ENCODE measurements at regions of chr11 and their contacts with region 1.

Region 1: DNA sequence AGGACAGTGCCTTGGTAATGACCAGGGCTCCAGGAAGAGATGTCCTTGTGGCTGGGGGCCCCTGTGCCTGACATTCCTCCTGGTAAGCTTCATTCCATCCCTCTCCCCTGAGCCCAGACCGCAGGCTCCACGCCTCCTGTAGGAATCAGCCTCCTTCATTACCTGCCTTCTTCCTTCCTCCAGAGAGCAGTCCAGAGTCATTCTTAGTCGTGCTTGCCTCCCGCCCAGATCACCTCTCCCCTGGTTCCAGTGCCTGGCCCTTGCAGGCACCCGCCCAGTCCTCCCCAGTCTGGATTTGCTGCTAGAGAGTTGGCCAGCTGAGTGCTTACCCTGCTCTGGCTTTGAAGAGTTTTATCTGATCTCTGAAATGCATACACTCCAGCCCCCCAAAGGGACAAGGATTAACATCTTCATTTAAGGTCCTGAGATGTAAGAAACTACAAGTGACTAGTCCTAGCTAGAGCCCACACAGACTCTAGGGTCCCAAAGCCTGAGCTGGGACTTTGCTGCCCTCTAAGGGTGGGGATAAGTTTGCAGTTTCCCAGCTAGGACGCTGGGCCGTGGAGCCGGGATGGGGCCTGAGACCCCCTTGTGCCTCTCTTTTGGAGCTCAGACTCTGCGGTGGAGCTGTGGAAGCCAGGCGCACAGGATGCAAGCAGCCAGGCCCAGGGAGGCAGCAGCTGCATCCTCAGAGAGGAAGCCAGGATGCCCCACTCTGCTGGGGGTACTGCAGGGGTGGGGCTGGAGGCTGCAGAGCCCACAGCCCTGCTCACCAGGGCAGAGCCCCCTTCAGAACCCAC is 1.6 kb downstream of the NR1H3 start:
- DNase-seq: peak; percentile 89 to 90
- H3K4me3 ChIP-seq: peak overlapping the region; percentile 57; the same call in 1 of the 2 replicates
- H3K27ac ChIP-seq: peak overlapping the region; percentile 61
- H3K4me1 ChIP-seq: peaks cover 56% of the 10 kb centered on the region
- H3K27me3 ChIP-seq: no peaks in the 10 kb centered on the region
- CTCF ChIP-seq: peak; percentile 94

Region 2: DNA sequence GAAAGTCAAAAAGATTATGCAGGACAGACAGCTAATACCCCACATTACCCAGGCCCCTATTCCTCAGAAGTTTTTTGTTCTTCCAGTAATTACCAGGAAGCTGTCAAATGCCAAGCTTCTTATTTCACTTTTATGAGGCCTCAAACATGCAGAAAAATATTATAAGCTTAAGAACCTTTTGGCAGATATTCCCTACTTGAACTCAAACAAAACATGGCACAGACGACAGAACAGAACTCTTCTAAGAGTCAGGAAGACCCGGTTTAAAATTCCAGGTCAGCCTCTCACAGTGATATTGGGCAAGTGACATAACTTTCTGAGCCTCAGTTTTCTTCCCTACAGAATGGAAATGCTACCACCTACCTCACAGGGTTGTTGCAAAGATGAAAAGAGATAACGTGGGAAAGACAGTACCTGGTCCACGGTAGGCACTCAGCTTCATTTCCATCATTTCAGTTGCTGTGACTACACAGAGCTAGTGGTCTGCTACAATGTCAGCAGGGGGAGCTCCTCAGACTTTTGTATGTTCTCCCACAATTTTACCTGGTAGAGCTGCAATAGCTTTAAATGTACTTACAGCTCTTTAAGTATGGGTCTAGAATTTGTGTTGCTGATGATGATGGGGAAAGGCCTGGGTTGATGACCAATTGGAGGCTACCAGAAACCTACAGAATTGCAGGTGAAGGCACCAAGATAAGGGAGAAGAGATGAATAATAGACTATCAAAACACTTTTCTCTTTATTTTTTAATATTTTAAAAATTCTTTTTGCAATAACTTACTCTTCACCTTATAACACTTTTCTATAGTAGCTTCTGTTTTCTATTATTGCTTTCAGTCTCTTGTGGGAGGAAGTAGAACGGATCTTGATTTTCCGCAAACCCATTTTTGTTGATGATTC is 769.5 kb before region 1 on chr11:
- CTCF ChIA-PET with region 1: no interaction called
- POLR2A ChIA-PET with region 1: no interaction called
- intact Hi-C with region 1: no loop called
- DNase-seq: peak in 1 of 2 experiments; percentile 23
- H3K4me3 ChIP-seq: no peak overlapping the region
- H3K27ac ChIP-seq: no peak overlapping the region
- H3K4me1 ChIP-seq: no peaks in the 10 kb centered on the region
- H3K27me3 ChIP-seq: no peaks in the 10 kb centered on the region
- CTCF ChIP-seq: peak; percentile 71

Region 3: DNA sequence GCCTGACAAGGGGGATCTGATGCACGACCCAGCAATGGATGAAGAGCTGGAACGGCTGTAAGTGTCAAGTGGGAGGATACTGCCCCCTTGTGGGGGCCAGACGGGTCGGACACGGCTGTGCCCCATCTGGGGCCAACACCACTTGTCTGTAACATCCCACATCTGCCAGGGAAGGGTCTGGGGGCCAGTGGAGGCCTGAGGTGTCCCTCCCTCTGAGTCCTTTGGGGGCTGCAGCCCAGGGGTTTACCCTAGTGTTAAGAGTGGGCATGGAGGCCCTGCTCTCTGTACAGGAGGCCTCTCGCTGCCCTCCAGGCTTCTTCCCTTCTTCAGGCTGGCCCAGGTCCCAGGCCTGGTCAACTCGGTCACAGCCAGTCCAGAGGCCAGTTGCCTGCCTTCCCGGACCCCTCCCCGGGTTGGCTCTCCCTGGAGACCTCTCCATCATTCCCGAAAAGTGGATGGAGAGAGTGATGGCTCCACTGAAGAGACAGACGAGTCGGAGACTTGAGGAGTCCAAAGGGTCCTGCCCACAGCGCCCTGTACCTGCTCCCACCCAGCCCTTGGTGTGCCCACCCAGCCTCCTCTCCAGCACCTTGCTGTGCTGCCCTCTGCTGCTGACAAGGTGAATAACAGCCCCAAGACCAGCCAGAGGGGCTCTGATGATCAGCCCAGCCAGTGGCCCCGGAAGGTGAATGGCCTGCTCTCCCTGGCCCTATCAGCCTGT is 98.1 kb before region 1 on chr11:
- CTCF ChIA-PET with region 1: interaction called, 4 read pairs
- POLR2A ChIA-PET with region 1: interaction called, 12 read pairs
- intact Hi-C with region 1: no loop called
- DNase-seq: peak; percentile 51 to 64
- H3K4me3 ChIP-seq: no peak overlapping the region
- H3K27ac ChIP-seq: no peak overlapping the region
- H3K4me1 ChIP-seq: no peaks in the 10 kb centered on the region
- H3K27me3 ChIP-seq: no peaks in the 10 kb centered on the region
- CTCF ChIP-seq: peak; percentile 75

Region 4: GRCh38 chr11:47186076-47186936 is 73.1 kb before region 1 on chr11 and contains the start of gene PACSIN3:
- CTCF ChIA-PET with region 1: interaction called, 12 read pairs
- POLR2A ChIA-PET with region 1: interaction called, 54 read pairs
- intact Hi-C with region 1: loop called (anchors 1 kb)
- DNase-seq: peak in 1 of 2 experiments; percentile 64
- H3K4me3 ChIP-seq: peak within 1 kb of the TSS; percentile 77
- H3K27ac ChIP-seq: peak within 1 kb of the TSS; percentile 84
- H3K4me1 ChIP-seq: peaks cover 56% of the 10 kb centered on the region
- H3K27me3 ChIP-seq: no peaks in the 10 kb centered on the region
- CTCF ChIP-seq: no peak
- total RNA-seq, gene PACSIN3: 113 and 114 TPM in 2 replicates

Region 5: GRCh38 chr11:47213985-47214564 is 45.3 kb before region 1 on chr11:
- CTCF ChIA-PET with region 1: interaction called, 24 read pairs
- POLR2A ChIA-PET with region 1: interaction called, 4 read pairs
- intact Hi-C with region 1: loop called (anchors 1 kb)
- DNase-seq: peak; percentile 85 to 91
- H3K4me3 ChIP-seq: peak overlapping the region; percentile 70
- H3K27ac ChIP-seq: peak overlapping the region; percentile 49
- H3K4me1 ChIP-seq: peaks cover 29% of the 10 kb centered on the region
- H3K27me3 ChIP-seq: no peaks in the 10 kb centered on the region
- CTCF ChIP-seq: no peak

Region 6: GRCh38 chr11:47355283-47356128 is 96.1 kb after region 1 on chr11:
- CTCF ChIA-PET with region 1: interaction called, 10 read pairs
- POLR2A ChIA-PET with region 1: no interaction called
- intact Hi-C with region 1: loop called (anchors 1 kb)
- DNase-seq: peak; percentile 88 to 99
- H3K4me3 ChIP-seq: peak overlapping the region; percentile 30; the same call in 1 of the 2 replicates
- H3K27ac ChIP-seq: no peak overlapping the region
- H3K4me1 ChIP-seq: no peaks in the 10 kb centered on the region
- H3K27me3 ChIP-seq: no peaks in the 10 kb centered on the region
- CTCF ChIP-seq: peak; percentile 98

Region 7: GRCh38 chr11:47552566-47553416 is 293.4 kb after region 1 on chr11 and contains the start of gene CELF1:
- CTCF ChIA-PET with region 1: no interaction called
- POLR2A ChIA-PET with region 1: interaction called, 14 read pairs
- intact Hi-C with region 1: no loop called
- DNase-seq: peak; percentile 77 to 96
- H3K4me3 ChIP-seq: peak within 1 kb of the TSS; percentile 80
- H3K27ac ChIP-seq: peak within 1 kb of the TSS; percentile 87
- H3K4me1 ChIP-seq: peaks cover 24% of the 10 kb centered on the region
- H3K27me3 ChIP-seq: no peaks in the 10 kb centered on the region
- CTCF ChIP-seq: peak; percentile 85
- total RNA-seq, gene CELF1: 115 and 165 TPM in 2 replicates

Measured in PC-9 (cell line).